ENCODE measurements at regions of chr5 and their contacts with region 1.

Region 1: GRCh38 chr5:87267574-87268125 is at the start of gene RASA1:
- DNase-seq: peak; percentile 91
- ATAC-seq: peak; percentile 85
- H3K4me3 ChIP-seq: peak within 1 kb of the TSS; percentile 90 to 98 (median 96)
- H3K27ac ChIP-seq: peak within 1 kb of the TSS; percentile 88
- H3K4me1 ChIP-seq: peaks cover 27% of the 10 kb centered on the region
- H3K27me3 ChIP-seq: no peaks in the 10 kb centered on the region; a peak in 1 of 5 replicates
- CTCF ChIP-seq: 0 out of 2 replicates have a peak, but pooled peaks have one; percentile 1
- EP300 ChIP-seq: no peak; a peak in 1 of 4 replicates
- POLR2A ChIP-seq: peak; percentile 73 to 92; a peak in 3 of 4 replicates
- RAD21 ChIP-seq: no peak
- total RNA-seq, gene RASA1: 19.5 and 23.4 TPM in 2 replicates

Region 2: GRCh38 chr5:87389287-87390034 is 121.8 kb after region 1 on chr5:
- CTCF ChIA-PET with region 1: no interaction called
- POLR2A ChIA-PET with region 1: no interaction called
- in situ Hi-C with region 1: no loop called
- intact Hi-C with region 1: loop called (anchors 5 kb)
- DNase-seq: no peak
- ATAC-seq: no peak
- H3K4me3 ChIP-seq: no peak overlapping the region
- H3K27ac ChIP-seq: no peak overlapping the region
- H3K4me1 ChIP-seq: peaks cover 11% of the 10 kb centered on the region
- H3K27me3 ChIP-seq: no peaks in the 10 kb centered on the region
- CTCF ChIP-seq: no peak
- EP300 ChIP-seq: no peak
- POLR2A ChIP-seq: no peak
- RAD21 ChIP-seq: no peak

Measured in HepG2 (cell line).